ENCODE measurements at regions of chr18 and their contacts with region 1.

Region 1: GRCh38 chr18:24118750-24119577 is 19.9 kb upstream of the CABYR start:
- DNase-seq: peak; percentile 81
- H3K4me3 ChIP-seq: no peak overlapping the region
- H3K27ac ChIP-seq: no peak overlapping the region
- H3K4me1 ChIP-seq: no peaks in the 10 kb centered on the region
- H3K27me3 ChIP-seq: no peaks in the 10 kb centered on the region
- CTCF ChIP-seq: peak; percentile 66 to 74
- POLR2A ChIP-seq: no peak

Region 2: DNA sequence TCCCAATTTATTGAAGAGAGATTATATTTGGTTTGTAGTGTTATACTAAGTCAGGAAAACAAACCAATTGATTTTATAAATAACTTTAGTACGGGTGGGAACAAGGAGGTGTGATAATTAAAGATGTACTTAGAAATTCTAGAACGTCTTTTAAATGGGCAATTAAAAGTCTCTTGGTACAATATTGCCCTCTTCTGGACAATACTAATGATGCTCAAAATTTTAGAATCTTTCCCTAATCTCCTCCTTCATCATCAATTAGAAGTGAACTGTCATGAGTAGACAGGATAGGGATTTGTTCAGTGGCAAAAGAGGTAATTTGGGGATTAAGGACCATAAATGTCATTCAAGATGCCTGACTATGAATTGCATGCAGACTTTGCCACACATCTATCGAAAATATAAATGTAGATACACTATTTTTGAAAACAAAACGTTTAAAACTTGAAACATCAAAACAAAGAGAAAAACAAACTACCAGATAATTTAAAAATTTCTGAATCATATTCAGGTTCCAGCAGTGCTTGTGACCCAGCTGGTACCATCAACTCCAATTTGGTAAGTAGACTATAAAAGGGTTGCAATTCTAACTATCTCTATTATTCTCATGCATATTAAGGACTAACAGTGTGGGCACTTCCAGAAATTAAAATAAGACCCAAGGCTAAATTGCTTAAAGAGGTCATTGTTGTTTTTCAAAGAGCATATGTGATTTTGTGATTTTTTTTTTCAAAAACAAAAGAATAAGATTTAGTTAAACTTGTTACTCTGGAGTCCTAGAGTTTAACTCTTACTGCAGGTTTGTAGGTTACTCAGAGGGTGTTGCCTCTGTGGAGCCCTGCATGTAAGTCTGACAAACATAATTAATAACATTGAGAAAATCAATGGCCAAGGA is 306.2 kb before region 1 on chr18:
- CTCF ChIA-PET with region 1: no interaction called
- POLR2A ChIA-PET with region 1: no interaction called
- dilution Hi-C with region 1: no loop called
- intact Hi-C with region 1: loop called (anchors 1 kb)
- DNase-seq: peak; percentile 58
- H3K4me3 ChIP-seq: no peak overlapping the region
- H3K27ac ChIP-seq: no peak overlapping the region
- H3K4me1 ChIP-seq: no peaks in the 10 kb centered on the region
- H3K27me3 ChIP-seq: no peaks in the 10 kb centered on the region
- CTCF ChIP-seq: peak; percentile 21 to 30
- POLR2A ChIP-seq: no peak

Region 3: DNA sequence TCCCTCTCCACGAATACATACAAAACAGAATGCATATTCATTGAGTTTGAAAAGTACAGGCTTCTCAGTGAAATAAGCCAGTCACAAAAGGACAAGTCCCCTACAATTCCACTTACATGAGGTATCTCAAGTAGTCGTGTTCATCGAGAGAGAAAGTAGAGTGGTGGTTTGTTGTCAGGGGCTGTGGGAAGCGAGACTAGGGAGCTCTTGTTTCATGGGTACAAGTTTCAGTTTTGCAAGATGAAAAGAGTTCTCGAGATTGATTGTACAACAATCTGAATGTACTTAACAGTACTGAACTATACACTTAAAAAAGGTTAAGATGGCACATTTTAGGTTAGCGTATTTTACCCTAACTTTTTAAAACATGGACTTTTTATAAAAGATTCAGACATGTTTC is 175.9 kb before region 1 on chr18:
- CTCF ChIA-PET with region 1: no interaction called
- POLR2A ChIA-PET with region 1: no interaction called
- dilution Hi-C with region 1: no loop called
- intact Hi-C with region 1: no loop called
- DNase-seq: no peak
- H3K4me3 ChIP-seq: no peak overlapping the region
- H3K27ac ChIP-seq: no peak overlapping the region
- H3K4me1 ChIP-seq: no peaks in the 10 kb centered on the region
- H3K27me3 ChIP-seq: no peaks in the 10 kb centered on the region
- CTCF ChIP-seq: no peak
- POLR2A ChIP-seq: no peak

Region 4: GRCh38 chr18:24014062-24014985 is 104.6 kb before region 1 on chr18 and contains the start of gene TTC39C:
- CTCF ChIA-PET with region 1: interaction called, 3 read pairs
- POLR2A ChIA-PET with region 1: no interaction called
- dilution Hi-C with region 1: no loop called
- intact Hi-C with region 1: loop called (anchors 10 kb)
- DNase-seq: peak; percentile 29
- H3K4me3 ChIP-seq: peak within 1 kb of the TSS; percentile 70 to 79 (median 77)
- H3K27ac ChIP-seq: no peak within 1 kb of the TSS
- H3K4me1 ChIP-seq: peaks cover 8% of the 10 kb centered on the region
- H3K27me3 ChIP-seq: peaks cover 34 to 47% of the 10 kb centered on the region in 2 experiments
- CTCF ChIP-seq: no peak
- POLR2A ChIP-seq: no peak
- total RNA-seq, gene TTC39C: 3.9 and 6.2 TPM in 2 replicates

Region 5: DNA sequence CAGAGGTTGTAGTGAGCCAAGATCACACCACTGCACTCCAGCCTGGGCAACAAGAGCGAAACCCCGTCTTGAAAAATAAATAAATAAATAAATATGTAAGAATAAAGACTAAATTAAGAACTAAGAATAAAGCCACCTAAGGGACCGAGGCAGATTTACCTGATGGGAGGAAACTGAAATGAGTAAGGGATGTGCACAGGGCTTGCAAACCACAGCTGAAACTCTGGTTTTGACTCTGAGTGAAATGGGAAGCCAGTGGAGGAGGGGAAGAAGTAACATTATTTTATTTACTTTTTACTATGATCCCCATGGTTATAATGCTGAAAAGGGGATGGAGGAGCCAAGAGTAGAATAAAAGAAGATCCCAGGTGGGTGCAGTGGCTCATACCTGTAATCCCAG is 127.2 kb after region 1 on chr18:
- CTCF ChIA-PET with region 1: no interaction called
- POLR2A ChIA-PET with region 1: no interaction called
- dilution Hi-C with region 1: no loop called
- intact Hi-C with region 1: no loop called
- DNase-seq: no peak
- H3K4me3 ChIP-seq: no peak overlapping the region
- H3K27ac ChIP-seq: no peak overlapping the region
- H3K4me1 ChIP-seq: no peaks in the 10 kb centered on the region
- H3K27me3 ChIP-seq: no peaks in the 10 kb centered on the region
- CTCF ChIP-seq: no peak
- POLR2A ChIP-seq: no peak